Activated T-helper 1 cell treated with anti-CD3 and anti-CD28 coated beads, Interleukin-12 subunit alpha, Interleukin-12 subunit beta, Interleukin-2, Interleukin-4 antibody, amounts not matched to agents 30 ng/mL and 10 ng/mL and 1 ng/mL, durations not matched to agents 14 hours and 24 hours and 36 hours (primary cell): ENCODE measurements at regions of chr16 and their contacts with region 1.

Region 1: GRCh38 chr16:55465077-55465896 is 13.7 kb upstream of the MMP2 start:
- DNase-seq: peak; percentile 72
- H3K4me3 Mint-ChIP-seq: no peak overlapping the region
- H3K27ac Mint-ChIP-seq: no peak overlapping the region
- H3K4me1 Mint-ChIP-seq: peaks cover 6% of the 10 kb centered on the region
- H3K27me3 Mint-ChIP-seq: no peaks in the 10 kb centered on the region

Region 2: DNA sequence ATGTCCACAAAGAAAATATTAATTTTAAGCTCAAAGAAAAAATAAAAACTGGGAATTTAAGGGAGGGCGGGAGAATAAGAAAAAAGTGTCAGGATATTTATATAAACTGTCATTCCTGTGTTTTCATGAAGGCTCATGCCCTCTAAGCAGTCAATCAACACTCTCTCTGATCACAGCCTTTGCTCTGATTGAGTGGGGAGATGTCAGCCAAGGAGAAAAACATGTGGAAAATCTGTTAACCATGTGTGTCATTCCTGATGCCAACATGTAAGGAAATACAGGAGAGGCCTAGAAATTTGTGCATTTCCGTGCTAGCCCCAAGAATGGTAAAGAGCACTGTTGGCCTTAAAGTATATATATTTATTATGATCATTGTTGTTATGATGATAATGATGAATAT is 672.5 kb before region 1 on chr16:
- intact Hi-C with region 1: no loop called
- DNase-seq: no peak
- H3K4me3 Mint-ChIP-seq: no peak overlapping the region
- H3K27ac Mint-ChIP-seq: no peak overlapping the region
- H3K4me1 Mint-ChIP-seq: no peaks in the 10 kb centered on the region
- H3K27me3 Mint-ChIP-seq: peaks cover 4% of the 10 kb centered on the region

Region 3: GRCh38 chr16:55508941-55509931 is 43.9 kb after region 1 on chr16 and contains the start of gene LPCAT2:
- intact Hi-C with region 1: loop called (anchors 1 kb)
- DNase-seq: peak; percentile 51
- H3K4me3 Mint-ChIP-seq: peak within 1 kb of the TSS; percentile 70
- H3K27ac Mint-ChIP-seq: peak within 1 kb of the TSS; percentile 47
- H3K4me1 Mint-ChIP-seq: peaks cover 7% of the 10 kb centered on the region
- H3K27me3 Mint-ChIP-seq: peaks cover 22% of the 10 kb centered on the region
- total RNA-seq, gene LPCAT2: 1.5 and 2.2 TPM in 2 replicates

Region 4: DNA sequence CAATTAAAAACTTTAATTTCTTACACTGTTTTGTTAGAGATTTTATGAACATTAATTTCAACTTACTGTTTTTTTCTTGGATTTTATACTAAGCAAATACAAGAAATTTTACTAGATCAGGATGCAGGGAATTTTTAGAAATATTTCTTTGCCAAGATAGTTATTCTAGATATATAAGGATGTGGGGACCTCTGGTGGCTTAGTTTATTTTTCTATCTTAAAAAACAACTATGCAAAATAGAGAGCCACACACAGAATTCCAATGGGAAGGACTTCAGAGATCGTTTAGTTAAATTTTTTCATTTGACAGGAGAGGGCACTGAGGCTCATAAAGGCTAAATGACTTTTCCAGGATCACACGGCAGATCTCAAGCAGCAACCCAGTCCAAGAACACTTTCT is 78.2 kb after region 1 on chr16:
- intact Hi-C with region 1: loop called (anchors 1 kb)
- DNase-seq: no peak
- H3K4me3 Mint-ChIP-seq: no peak overlapping the region
- H3K27ac Mint-ChIP-seq: no peak overlapping the region
- H3K4me1 Mint-ChIP-seq: no peaks in the 10 kb centered on the region
- H3K27me3 Mint-ChIP-seq: no peaks in the 10 kb centered on the region

Region 5: GRCh38 chr16:55701442-55702319 is 236.4 kb after region 1 on chr16:
- intact Hi-C with region 1: loop called (anchors 1 kb)
- DNase-seq: peak; percentile 2
- H3K4me3 Mint-ChIP-seq: no peak overlapping the region
- H3K27ac Mint-ChIP-seq: no peak overlapping the region
- H3K4me1 Mint-ChIP-seq: peaks cover 12% of the 10 kb centered on the region
- H3K27me3 Mint-ChIP-seq: peaks cover 10% of the 10 kb centered on the region

Region 6: GRCh38 chr16:55842369-55843104 is 377.2 kb after region 1 on chr16:
- intact Hi-C with region 1: loop called (anchors 1 kb)
- DNase-seq: no peak
- H3K4me3 Mint-ChIP-seq: no peak overlapping the region
- H3K27ac Mint-ChIP-seq: no peak overlapping the region
- H3K4me1 Mint-ChIP-seq: no peaks in the 10 kb centered on the region
- H3K27me3 Mint-ChIP-seq: peaks cover 7% of the 10 kb centered on the region